B cell (primary cell): ENCODE measurements at regions of chr15 and their contacts with region 1.

Region 1: GRCh38 chr15:59299929-59300617 is 72.6 kb downstream of the MYO1E start:
- DNase-seq: peak; percentile 92
- ATAC-seq: peak; percentile 89
- H3K4me3 ChIP-seq: peak overlapping the region in 2 of 5 experiments; percentile 16 to 26
- H3K4me3 Mint-ChIP-seq: peak overlapping the region; percentile 64
- H3K27ac ChIP-seq: peak overlapping the region; percentile 62 to 78
- H3K27ac Mint-ChIP-seq: peak overlapping the region; percentile 79
- H3K4me1 ChIP-seq: peaks cover 70 to 88% of the 10 kb centered on the region in 2 donors
- H3K4me1 Mint-ChIP-seq: peaks cover 84% of the 10 kb centered on the region
- H3K27me3 ChIP-seq: no peaks in the 10 kb centered on the region
- H3K27me3 Mint-ChIP-seq: no peaks in the 10 kb centered on the region
- CTCF ChIP-seq: no peak

Region 2: DNA sequence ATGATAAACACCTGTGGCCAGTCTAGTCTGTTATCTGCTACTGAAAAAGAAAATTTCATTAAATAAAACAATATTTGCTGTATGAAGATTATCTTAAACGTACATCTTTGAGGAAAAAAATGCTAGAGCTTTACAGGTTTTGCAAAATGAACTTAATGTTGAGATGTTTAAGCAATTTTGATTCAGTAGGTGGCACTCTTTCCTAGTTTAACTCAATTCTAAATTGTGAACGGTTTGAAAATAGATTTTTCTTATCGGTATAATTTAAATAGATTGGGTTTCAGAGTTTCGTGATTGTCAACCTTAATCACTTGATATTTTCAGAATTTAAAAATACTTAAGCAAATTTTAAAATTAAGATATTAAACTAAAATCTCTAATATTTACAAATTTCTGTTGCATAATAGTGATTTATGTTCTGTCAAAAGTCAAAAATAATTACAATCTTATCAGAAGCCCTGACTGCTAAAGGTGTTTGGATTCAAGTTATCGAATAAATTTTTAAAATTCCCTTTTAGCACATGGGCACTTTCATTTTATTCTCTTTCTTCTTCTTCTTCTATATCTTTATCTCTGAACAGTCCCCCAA is 319.6 kb before region 1 on chr15:
- CTCF ChIA-PET with region 1: interaction called, 5 read pairs
- POLR2A ChIA-PET with region 1: no interaction called
- intact Hi-C with region 1: loop called (anchors 2 kb)
- DNase-seq: peak; percentile 63
- ATAC-seq: no peak
- H3K4me3 ChIP-seq: no peak overlapping the region
- H3K4me3 Mint-ChIP-seq: peak overlapping the region; percentile 67
- H3K27ac ChIP-seq: peak overlapping the region; percentile 70 to 75
- H3K27ac Mint-ChIP-seq: peak overlapping the region; percentile 98
- H3K4me1 ChIP-seq: peaks cover 50 to 59% of the 10 kb centered on the region in 2 donors
- H3K4me1 Mint-ChIP-seq: peaks cover 49% of the 10 kb centered on the region
- H3K27me3 ChIP-seq: no peaks in the 10 kb centered on the region
- H3K27me3 Mint-ChIP-seq: no peaks in the 10 kb centered on the region
- CTCF ChIP-seq: peak; percentile 79

Region 3: GRCh38 chr15:59349680-59350420 is 49.8 kb after region 1 on chr15:
- CTCF ChIA-PET with region 1: no interaction called
- POLR2A ChIA-PET with region 1: no interaction called
- intact Hi-C with region 1: loop called (anchors 10 kb)
- DNase-seq: no peak
- ATAC-seq: no peak
- H3K4me3 ChIP-seq: no peak overlapping the region
- H3K4me3 Mint-ChIP-seq: no peak overlapping the region
- H3K27ac ChIP-seq: peak overlapping the region in 1 of 2 donors; percentile 49
- H3K27ac Mint-ChIP-seq: peak overlapping the region; percentile 43
- H3K4me1 ChIP-seq: peaks cover 65 to 69% of the 10 kb centered on the region in 2 donors
- H3K4me1 Mint-ChIP-seq: peaks cover 77% of the 10 kb centered on the region
- H3K27me3 ChIP-seq: no peaks in the 10 kb centered on the region
- H3K27me3 Mint-ChIP-seq: no peaks in the 10 kb centered on the region
- CTCF ChIP-seq: no peak

Region 4: DNA sequence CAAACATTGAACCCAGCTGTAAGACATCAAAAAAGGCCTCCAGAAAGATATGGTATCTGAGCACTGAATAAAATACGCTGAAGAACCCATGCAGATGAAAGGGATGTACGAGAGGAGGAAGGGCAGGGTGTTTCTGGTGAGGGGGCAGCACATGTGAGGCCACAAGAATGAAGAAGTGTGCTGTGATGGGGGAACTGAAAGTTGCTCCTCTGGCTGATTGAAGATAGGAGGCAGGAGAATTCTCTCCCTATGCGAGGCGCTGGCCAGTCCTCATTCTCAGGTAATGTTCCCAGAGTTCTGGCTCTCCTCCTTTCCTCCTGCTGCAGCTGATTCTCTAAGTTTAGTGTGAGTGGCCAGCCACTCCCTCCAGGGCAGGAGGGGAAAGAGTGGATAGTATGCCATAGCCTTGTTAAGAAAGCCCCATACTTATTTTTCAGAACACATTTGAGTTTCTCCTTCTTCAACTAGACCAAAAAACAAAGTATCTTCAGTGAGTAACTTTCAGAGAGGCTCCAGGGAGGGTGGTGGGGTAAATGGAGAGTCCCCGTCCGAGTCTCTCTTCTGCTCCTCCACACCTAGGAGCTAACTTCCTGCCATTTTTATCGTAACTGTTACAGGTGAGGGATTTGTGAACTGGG is 99.5 kb after region 1 on chr15:
- CTCF ChIA-PET with region 1: no interaction called
- POLR2A ChIA-PET with region 1: no interaction called
- intact Hi-C with region 1: loop called (anchors 1 kb)
- DNase-seq: peak; percentile 89
- ATAC-seq: peak; percentile 95
- H3K4me3 ChIP-seq: peak overlapping the region; percentile 21 to 48 (median 35)
- H3K4me3 Mint-ChIP-seq: peak overlapping the region; percentile 80
- H3K27ac ChIP-seq: peak overlapping the region; percentile 70 to 89
- H3K27ac Mint-ChIP-seq: peak overlapping the region; percentile 93
- H3K4me1 ChIP-seq: peaks cover 73 to 81% of the 10 kb centered on the region in 2 donors
- H3K4me1 Mint-ChIP-seq: peaks cover 78% of the 10 kb centered on the region
- H3K27me3 ChIP-seq: no peaks in the 10 kb centered on the region
- H3K27me3 Mint-ChIP-seq: no peaks in the 10 kb centered on the region
- CTCF ChIP-seq: no peak

Region 5: DNA sequence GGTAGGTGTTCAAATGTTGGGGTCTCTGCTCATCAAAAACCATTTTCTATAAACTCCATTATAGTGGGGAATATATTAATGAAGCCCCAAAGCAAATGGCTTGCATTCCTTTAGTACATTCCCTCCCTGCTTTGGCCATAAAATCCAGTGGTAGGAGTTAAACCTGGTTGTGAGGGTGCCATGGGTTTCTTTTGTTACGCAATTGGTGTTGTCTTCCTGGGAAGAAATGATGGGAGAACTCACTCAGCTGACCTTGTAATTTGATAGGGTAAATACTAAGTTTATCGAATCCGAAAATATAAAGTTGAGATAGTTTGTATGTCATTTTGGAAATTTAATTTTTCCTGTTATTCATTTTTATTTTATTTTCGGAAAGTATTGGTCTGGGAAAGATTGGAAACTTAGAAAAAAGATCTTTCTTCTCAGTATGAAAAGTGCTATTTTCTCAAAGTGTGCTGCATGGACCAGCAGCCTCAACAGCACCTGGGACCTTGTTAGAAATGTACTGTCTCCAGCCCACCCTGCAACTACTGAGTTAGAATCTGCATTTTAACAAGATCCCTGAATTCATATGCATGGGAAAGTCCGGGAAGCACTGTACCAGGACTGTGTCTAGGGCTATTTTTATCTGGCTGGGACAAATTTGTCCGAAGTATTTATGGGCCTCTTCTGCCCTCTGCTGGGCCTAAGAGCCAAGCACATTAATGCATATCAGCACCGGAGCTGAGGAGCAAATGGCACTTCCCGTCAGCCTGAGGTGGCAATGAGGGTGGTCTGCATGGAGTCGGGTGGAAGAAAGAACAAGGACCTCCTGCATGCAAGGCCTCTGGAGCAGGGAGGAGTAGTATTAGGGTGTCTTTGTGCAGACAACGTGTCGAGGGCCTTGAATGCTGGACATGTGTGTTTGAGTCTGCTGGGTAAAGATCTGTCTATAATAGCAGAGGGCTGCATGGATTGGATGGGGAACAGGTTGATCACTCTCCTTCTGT is 192.6 kb after region 1 on chr15:
- CTCF ChIA-PET with region 1: interaction called, 3 read pairs
- POLR2A ChIA-PET with region 1: no interaction called
- intact Hi-C with region 1: loop called (anchors 5 kb)
- DNase-seq: peak; percentile 80
- ATAC-seq: peak; percentile 88
- H3K4me3 ChIP-seq: no peak overlapping the region
- H3K4me3 Mint-ChIP-seq: no peak overlapping the region
- H3K27ac ChIP-seq: no peak overlapping the region
- H3K27ac Mint-ChIP-seq: no peak overlapping the region
- H3K4me1 ChIP-seq: peaks cover 8% of the 10 kb centered on the region in 2 donors
- H3K4me1 Mint-ChIP-seq: peaks cover 9% of the 10 kb centered on the region
- H3K27me3 ChIP-seq: no peaks in the 10 kb centered on the region
- H3K27me3 Mint-ChIP-seq: no peaks in the 10 kb centered on the region
- CTCF ChIP-seq: peak; percentile 99